ENCODE measurements at regions of chr1 and their contacts with region 1.

Region 1: GRCh38 chr1:84573967-84574842 is at the start of gene CTBS:
- DNase-seq: peak; percentile 90
- ATAC-seq: peak; percentile 95
- H3K4me3 Mint-ChIP-seq: peak within 1 kb of the TSS; percentile 94
- H3K27ac Mint-ChIP-seq: peak within 1 kb of the TSS; percentile 99
- H3K4me1 Mint-ChIP-seq: peaks cover 33% of the 10 kb centered on the region
- H3K27me3 Mint-ChIP-seq: no peaks in the 10 kb centered on the region
- total RNA-seq, gene CTBS: 12.3 to 12.7 TPM

Region 2: DNA sequence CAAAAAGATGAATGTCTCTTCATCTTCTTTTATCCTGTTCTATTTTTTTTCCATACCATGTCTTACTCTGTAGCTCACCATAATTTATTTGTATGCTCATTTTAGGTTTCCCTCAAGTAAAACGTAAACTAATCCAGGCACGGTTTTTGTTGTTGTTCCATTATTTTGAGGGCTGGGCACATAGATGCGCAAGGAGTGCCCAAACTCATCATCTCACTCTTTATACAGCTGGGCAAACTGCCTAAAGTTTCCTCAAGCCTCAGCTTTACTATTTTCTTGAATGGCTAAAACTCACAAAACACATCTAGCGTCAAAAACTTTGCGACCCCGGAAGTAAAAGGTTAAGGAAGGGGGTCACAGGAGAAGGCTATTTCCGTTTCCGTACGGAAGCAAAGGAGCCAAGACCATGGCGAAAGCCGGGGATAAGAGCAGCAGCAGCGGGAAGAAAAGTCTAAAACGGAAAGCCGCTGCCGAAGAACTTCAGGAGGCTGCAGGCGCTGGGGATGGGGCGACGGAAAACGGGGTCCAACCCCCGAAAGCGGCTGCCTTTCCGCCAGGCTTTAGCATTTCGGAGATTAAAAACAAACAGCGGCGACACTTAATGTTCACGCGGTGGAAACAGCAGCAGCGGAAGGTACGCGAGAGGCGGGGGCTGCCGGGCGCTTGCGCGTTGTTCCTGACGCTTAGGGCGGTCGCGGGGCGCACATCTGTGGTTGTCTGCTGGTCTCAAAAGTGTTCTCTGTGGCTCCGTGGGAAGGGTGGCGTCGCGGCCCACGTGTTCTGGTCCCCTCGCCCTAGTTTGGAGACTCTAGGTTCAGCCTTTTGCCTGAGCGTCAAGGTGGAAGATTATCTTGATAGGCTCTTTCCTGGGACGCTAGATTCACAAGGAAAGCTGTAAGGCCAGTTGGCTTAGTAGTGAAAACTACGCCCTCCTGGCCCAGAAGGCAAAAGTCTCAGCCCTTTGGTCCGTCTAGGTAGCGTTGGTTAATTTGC is 95.0 kb before region 1 on chr1 and contains the start of gene RPF1:
- CTCF ChIA-PET with region 1: interaction called, 3 read pairs
- POLR2A ChIA-PET with region 1: interaction called, 20 read pairs
- DNase-seq: peak; percentile 84
- ATAC-seq: peak; percentile 98
- H3K4me3 Mint-ChIP-seq: peak within 1 kb of the TSS; percentile 99
- H3K27ac Mint-ChIP-seq: peak within 1 kb of the TSS; percentile 99
- H3K4me1 Mint-ChIP-seq: peaks cover 32% of the 10 kb centered on the region
- H3K27me3 Mint-ChIP-seq: peaks cover 20% of the 10 kb centered on the region
- total RNA-seq, gene RPF1: 41.6 to 44.1 TPM

Region 3: DNA sequence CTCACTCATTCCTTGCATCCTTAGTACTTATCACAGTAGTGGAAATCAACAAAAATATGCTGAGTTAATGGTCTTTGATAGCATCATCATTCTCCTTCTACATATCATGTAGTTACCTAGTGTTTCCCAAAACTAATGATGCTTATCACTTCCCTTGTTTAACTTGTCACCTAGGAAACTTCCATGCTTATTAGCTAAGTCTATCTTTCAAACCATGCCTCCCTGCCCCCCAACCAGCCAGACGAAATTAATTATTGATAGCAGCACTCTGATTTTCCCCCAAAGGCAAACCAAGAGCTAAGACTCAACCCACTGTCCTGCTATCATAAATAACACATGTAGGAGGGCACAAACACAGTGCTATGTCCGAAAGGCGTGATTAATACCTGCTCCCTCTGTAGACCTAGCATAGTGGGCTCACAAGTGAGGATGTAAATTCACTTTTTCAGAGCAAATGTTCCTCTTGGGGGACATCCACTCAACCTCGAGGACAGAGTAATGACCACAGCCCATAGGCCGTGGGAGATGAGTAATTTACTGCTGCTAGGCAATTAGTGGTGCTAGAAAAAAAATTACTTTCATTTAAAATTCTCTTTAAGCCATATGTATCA is 344.6 kb after region 1 on chr1:
- CTCF ChIA-PET with region 1: no interaction called
- POLR2A ChIA-PET with region 1: no interaction called
- DNase-seq: no peak
- ATAC-seq: no peak
- H3K4me3 Mint-ChIP-seq: no peak overlapping the region
- H3K27ac Mint-ChIP-seq: no peak overlapping the region
- H3K4me1 Mint-ChIP-seq: no peaks in the 10 kb centered on the region
- H3K27me3 Mint-ChIP-seq: peaks cover 7% of the 10 kb centered on the region

Measured in activated CD8-positive, alpha-beta T cell treated with anti-CD3 and anti-CD28 coated beads, Interleukin-2, amount 10 ng/mL, durations not matched to agents 7 days and 5 days (primary cell).